ENCODE measurements at regions of chr1 and their contacts with region 1.

Region 1: DNA sequence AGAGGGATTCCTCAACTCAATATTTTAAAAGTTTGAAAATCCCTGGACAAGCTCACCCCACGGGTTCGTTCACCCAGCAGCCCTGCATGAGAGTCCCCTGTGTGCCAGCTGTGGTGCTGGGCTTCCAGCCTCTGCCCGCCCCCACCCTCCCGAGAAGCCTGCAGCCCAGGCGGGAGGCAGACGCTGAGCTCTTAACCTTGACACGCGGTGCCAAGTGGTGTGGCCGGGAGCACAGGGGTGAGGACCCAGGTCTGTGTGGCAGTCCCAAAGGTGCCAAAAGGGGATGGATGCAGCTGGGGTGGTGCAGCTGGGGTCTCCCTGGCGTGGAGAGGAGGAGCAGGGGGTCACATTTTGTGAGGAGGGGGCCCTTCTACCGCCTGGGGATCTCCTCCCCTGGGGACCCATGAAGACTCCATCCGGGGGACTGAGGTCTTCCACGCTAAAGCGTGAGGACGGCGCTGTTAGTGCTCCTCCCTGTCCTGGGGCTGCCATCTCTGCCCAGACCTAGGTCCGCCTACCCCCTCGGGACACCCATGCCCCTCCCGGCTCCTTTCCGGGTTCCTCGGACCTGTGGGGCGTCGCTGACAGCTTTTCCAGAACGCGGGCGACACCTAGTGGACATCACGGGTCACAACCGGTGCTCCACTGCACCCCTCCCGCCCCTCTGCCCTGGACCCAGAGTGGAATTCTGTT is 12.9 kb downstream of the PLA2G2F start:
- DNase-seq: peak; percentile 94
- H3K4me3 ChIP-seq: peak overlapping the region; percentile 47 to 53 (median 50)
- H3K27ac ChIP-seq: peak overlapping the region in 3 of 4 donors; percentile 22 to 48 (median 23)
- H3K4me1 ChIP-seq: peaks cover 13 to 21% (median 18%) of the 10 kb centered on the region in 4 donors
- H3K27me3 ChIP-seq: peaks cover 0 to 6% (median 0%) of the 10 kb centered on the region in 4 donors
- CTCF ChIP-seq: peak; percentile 91 to 97 (median 94)
- EP300 ChIP-seq: no peak
- POLR2A ChIP-seq: no peak

Region 2: GRCh38 chr1:19918057-19918456 is 234.0 kb before region 1 on chr1:
- intact Hi-C with region 1: loop called (anchors 1 kb)
- DNase-seq: no peak
- H3K4me3 ChIP-seq: no peak overlapping the region
- H3K27ac ChIP-seq: no peak overlapping the region
- H3K4me1 ChIP-seq: peaks cover 0 to 6% (median 2%) of the 10 kb centered on the region in 4 donors
- H3K27me3 ChIP-seq: peaks cover 0 to 3% (median 0%) of the 10 kb centered on the region in 4 donors
- CTCF ChIP-seq: peak; percentile 88 to 89 (median 88)
- EP300 ChIP-seq: no peak
- POLR2A ChIP-seq: no peak

Region 3: DNA sequence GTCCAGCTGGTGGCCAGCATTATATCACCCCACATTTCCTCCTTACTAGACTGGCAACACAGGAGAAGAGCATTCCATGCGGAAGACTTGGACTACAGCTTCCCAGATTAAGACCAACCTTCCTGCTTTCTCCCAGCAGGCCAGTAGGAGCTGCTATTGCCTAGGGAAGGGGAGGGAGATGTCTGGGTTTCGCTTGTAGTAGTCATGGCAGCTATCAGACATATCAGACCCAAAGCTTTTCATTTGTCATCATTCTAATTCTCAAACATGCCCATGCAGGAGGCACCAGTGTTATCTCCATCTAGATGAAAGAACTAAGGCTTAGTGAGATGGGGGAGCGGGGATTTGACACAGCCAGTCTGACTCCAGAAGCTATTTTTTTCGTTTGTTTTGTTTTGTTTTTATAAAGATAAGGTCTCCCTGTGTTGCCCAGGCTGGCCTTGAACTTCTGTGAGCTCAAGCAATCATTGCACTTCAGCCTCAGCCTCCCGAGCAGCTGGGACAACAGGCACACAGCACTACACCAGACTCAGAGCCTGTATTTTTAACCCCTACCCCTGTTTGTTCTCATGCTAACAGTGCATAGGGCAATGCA is 177.1 kb before region 1 on chr1:
- intact Hi-C with region 1: loop called (anchors 2 kb)
- DNase-seq: no peak
- H3K4me3 ChIP-seq: no peak overlapping the region
- H3K27ac ChIP-seq: no peak overlapping the region
- H3K4me1 ChIP-seq: peaks cover 2 to 18% (median 17%) of the 10 kb centered on the region in 4 donors
- H3K27me3 ChIP-seq: peaks cover 0 to 10% (median 0%) of the 10 kb centered on the region in 4 donors
- CTCF ChIP-seq: peak; percentile 62 to 81 (median 78)
- EP300 ChIP-seq: no peak
- POLR2A ChIP-seq: no peak

Region 4: GRCh38 chr1:20100632-20101355 is 51.3 kb before region 1 on chr1:
- intact Hi-C with region 1: loop called (anchors 5 kb)
- DNase-seq: no peak
- H3K4me3 ChIP-seq: no peak overlapping the region
- H3K27ac ChIP-seq: no peak overlapping the region
- H3K4me1 ChIP-seq: peaks cover 0 to 12% (median 6%) of the 10 kb centered on the region in 4 donors
- H3K27me3 ChIP-seq: no peaks in the 10 kb centered on the region
- CTCF ChIP-seq: peak; percentile 70 to 85 (median 82)
- EP300 ChIP-seq: no peak
- POLR2A ChIP-seq: no peak

Region 5: DNA sequence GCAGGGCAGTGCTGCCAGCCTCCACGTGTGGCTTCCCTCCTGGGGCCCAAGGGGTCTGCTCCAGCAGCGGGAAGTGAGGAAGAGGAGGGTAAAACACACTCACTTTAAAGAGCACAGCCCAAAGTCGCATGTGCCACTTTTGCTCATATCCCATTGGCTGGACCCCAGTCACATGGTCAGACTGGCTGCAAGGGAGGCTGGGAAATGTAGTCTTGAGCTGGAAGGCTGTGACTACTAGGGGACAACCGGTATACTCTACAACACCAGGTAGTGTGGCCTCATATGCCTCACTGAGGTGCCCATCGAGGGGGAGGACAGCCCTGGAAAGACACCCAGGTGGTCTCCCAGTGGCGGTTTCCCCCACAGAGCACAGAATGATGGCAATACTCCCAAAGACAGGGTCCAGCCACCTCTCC is 288.7 kb after region 1 on chr1:
- intact Hi-C with region 1: no loop called
- DNase-seq: no peak
- H3K4me3 ChIP-seq: no peak overlapping the region
- H3K27ac ChIP-seq: no peak overlapping the region
- H3K4me1 ChIP-seq: no peaks in the 10 kb centered on the region
- H3K27me3 ChIP-seq: peaks cover 0 to 12% (median 2%) of the 10 kb centered on the region in 4 donors
- CTCF ChIP-seq: no peak
- EP300 ChIP-seq: no peak
- POLR2A ChIP-seq: no peak

Measured in esophagus muscularis mucosa (tissue), 4 donors.